ENCODE measurements at regions of chr7 and their contacts with region 1.

Region 1: DNA sequence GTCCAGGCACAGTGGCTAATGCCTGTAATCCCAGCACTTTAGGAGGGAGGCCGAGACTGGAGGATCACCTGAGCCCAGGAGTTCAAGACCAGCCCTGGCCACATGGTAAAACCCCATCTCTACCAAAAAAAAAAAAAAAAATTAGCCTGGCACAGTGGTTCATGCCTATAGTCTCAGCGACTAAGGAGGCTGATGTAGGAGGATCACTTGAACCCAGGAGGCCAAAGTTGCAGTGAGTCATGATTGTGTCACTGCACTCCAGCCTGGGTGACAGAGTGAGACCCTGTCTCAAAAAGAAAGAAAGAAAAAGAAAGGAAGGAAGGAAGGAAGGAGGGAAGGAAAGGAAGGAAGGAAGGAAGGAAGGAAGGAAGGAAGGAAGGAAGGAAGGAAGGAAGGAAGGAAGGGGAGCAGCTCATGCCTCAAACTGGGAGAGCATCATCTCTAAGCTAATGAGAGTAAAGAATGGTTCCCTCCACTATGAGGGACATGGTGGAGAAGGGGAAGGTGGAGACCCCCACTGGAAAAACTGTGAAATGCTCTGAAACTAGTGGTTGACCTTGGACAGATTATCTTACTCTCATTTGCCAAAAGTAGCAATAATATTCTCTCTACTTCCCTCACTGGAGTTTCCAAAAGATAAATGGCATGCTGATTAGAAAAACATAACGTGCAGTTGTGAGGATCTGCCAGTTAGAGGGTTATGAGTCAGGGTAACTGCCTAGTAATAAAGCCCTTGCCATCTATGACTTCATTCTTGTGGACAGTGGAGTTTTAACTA is 16.8 kb downstream of the GIMAP5 start:
- DNase-seq: peak in 1 of 5 donors; percentile 45
- H3K4me3 ChIP-seq: no peak overlapping the region
- H3K4me3 Mint-ChIP-seq: peak overlapping the region in 7 of 8 donors; percentile 8 to 76 (median 52)
- H3K27ac ChIP-seq: peak overlapping the region; percentile 37
- H3K27ac Mint-ChIP-seq: peak overlapping the region; percentile 90 to 97 (median 93)
- H3K4me1 ChIP-seq: peaks cover 80% of the 10 kb centered on the region
- H3K4me1 Mint-ChIP-seq: peaks cover 56 to 79% (median 68%) of the 10 kb centered on the region in 4 donors
- H3K27me3 ChIP-seq: no peaks in the 10 kb centered on the region
- H3K27me3 Mint-ChIP-seq: peaks cover 0 to 2% of the 10 kb centered on the region in 2 donors

Region 2: GRCh38 chr7:150404805-150405583 is 349.0 kb before region 1 on chr7:
- CTCF ChIA-PET with region 1: interaction called, 3 read pairs
- POLR2A ChIA-PET with region 1: interaction called, 18 read pairs
- intact Hi-C with region 1: loop called (anchors 1 kb)
- DNase-seq: peak; percentile 75 to 80 (median 77)
- H3K4me3 ChIP-seq: peak overlapping the region; percentile 62 to 92
- H3K4me3 Mint-ChIP-seq: peak overlapping the region; percentile 93 to 99 (median 98)
- H3K27ac ChIP-seq: peak overlapping the region; percentile 85
- H3K27ac Mint-ChIP-seq: peak overlapping the region; percentile 80 to 99 (median 98)
- H3K4me1 ChIP-seq: peaks cover 30% of the 10 kb centered on the region
- H3K4me1 Mint-ChIP-seq: peaks cover 21 to 53% (median 39%) of the 10 kb centered on the region in 4 donors
- H3K27me3 ChIP-seq: no peaks in the 10 kb centered on the region
- H3K27me3 Mint-ChIP-seq: no peaks in the 10 kb centered on the region

Region 3: DNA sequence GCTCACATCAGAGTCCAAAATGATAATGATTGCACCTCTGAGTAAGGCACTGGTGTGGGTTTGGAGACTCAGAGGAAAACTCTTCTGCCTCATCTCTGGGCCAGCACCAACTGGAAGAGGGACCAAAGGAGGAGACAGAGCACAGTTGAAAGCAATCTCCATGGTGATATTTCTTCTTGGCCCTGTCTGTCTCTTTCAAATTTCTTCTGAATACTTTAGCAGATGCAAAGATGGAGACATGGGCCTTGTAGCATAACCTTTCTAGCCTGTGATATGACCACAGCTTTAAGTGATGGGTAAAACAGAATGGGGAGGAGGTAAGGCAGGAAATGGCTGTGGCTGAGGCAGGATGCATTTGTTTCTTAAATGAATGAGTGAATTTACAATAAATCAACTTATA is 251.5 kb before region 1 on chr7:
- CTCF ChIA-PET with region 1: no interaction called
- POLR2A ChIA-PET with region 1: interaction called, 31 read pairs
- intact Hi-C with region 1: no loop called
- DNase-seq: peak; percentile 56 to 75 (median 67)
- H3K4me3 ChIP-seq: no peak overlapping the region
- H3K4me3 Mint-ChIP-seq: peak overlapping the region; percentile 22 to 86 (median 73)
- H3K27ac ChIP-seq: peak overlapping the region; percentile 51
- H3K27ac Mint-ChIP-seq: peak overlapping the region; percentile 84 to 99 (median 92)
- H3K4me1 ChIP-seq: peaks cover 53% of the 10 kb centered on the region
- H3K4me1 Mint-ChIP-seq: peaks cover 66 to 94% (median 81%) of the 10 kb centered on the region in 4 donors
- H3K27me3 ChIP-seq: no peaks in the 10 kb centered on the region
- H3K27me3 Mint-ChIP-seq: no peaks in the 10 kb centered on the region

Region 4: GRCh38 chr7:150556521-150557138 is 197.4 kb before region 1 on chr7:
- CTCF ChIA-PET with region 1: interaction called, 4 read pairs
- POLR2A ChIA-PET with region 1: interaction called, 235 read pairs
- intact Hi-C with region 1: no loop called
- DNase-seq: peak in 4 of 5 donors; percentile 53 to 76 (median 72)
- H3K4me3 ChIP-seq: peak overlapping the region in 1 of 2 donors; percentile 4
- H3K4me3 Mint-ChIP-seq: peak overlapping the region; percentile 34 to 87 (median 78)
- H3K27ac ChIP-seq: peak overlapping the region; percentile 40
- H3K27ac Mint-ChIP-seq: peak overlapping the region; percentile 79 to 96 (median 94)
- H3K4me1 ChIP-seq: peaks cover 64% of the 10 kb centered on the region
- H3K4me1 Mint-ChIP-seq: peaks cover 53 to 87% (median 72%) of the 10 kb centered on the region in 4 donors
- H3K27me3 ChIP-seq: no peaks in the 10 kb centered on the region
- H3K27me3 Mint-ChIP-seq: no peaks in the 10 kb centered on the region

Region 5: DNA sequence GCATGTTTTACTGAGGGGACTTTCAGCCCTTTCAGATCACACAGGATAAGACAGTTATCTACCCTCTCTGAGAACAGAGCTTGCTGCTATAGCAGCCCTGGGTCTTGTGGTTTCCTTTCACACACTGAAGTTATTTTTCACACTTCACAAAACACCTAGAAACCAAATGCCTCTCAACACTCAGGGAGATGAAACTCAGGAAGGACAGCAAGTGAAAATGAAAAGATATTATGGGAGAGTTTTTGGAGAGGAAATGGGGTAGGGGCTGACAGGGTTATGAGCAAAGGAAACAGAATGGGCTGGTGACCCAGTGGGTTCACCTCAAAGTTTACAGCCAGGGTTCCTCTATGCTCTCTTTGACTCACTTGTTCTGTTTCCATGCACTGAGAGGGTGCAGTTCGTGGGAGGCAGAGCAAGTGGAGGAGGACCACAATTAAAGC is 85.5 kb before region 1 on chr7:
- CTCF ChIA-PET with region 1: interaction called, 5 read pairs
- POLR2A ChIA-PET with region 1: interaction called, 149 read pairs
- intact Hi-C with region 1: loop called (anchors 2 kb)
- DNase-seq: peak; percentile 80 to 88 (median 85)
- H3K4me3 ChIP-seq: peak overlapping the region; percentile 2 to 26
- H3K4me3 Mint-ChIP-seq: peak overlapping the region; percentile 55 to 84 (median 72)
- H3K27ac ChIP-seq: peak overlapping the region; percentile 68
- H3K27ac Mint-ChIP-seq: peak overlapping the region; percentile 82 to 99 (median 98)
- H3K4me1 ChIP-seq: peaks cover 92% of the 10 kb centered on the region
- H3K4me1 Mint-ChIP-seq: peaks cover 63 to 95% (median 79%) of the 10 kb centered on the region in 4 donors
- H3K27me3 ChIP-seq: no peaks in the 10 kb centered on the region
- H3K27me3 Mint-ChIP-seq: no peaks in the 10 kb centered on the region

Region 6: DNA sequence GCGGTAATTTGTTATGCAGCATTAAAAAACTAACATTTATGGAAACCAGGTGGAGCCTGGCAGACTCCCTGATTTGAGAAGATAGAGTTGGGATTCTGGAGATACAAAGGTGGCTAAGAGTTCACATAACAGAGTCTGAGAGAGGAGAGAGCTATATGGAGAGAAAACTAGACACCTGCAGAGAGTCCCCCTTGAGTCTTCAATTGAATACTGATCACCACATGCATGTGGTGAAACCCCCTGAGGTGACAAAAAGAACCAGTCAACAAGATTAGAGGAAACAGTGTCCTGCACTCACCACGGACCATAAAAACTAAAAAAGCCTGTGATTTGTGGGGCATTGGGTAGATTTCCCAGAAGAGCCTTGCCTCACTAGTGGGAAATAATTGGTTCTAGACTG is 58.4 kb before region 1 on chr7:
- CTCF ChIA-PET with region 1: interaction called, 4 read pairs
- POLR2A ChIA-PET with region 1: interaction called, 13 read pairs
- intact Hi-C with region 1: no loop called
- DNase-seq: no peak
- H3K4me3 ChIP-seq: no peak overlapping the region
- H3K4me3 Mint-ChIP-seq: peak overlapping the region in 2 of 8 donors; percentile 57
- H3K27ac ChIP-seq: no peak overlapping the region
- H3K27ac Mint-ChIP-seq: peak overlapping the region in 1 of 7 donors; percentile 4
- H3K4me1 ChIP-seq: peaks cover 6% of the 10 kb centered on the region
- H3K4me1 Mint-ChIP-seq: peaks cover 5 to 20% (median 13%) of the 10 kb centered on the region in 4 donors
- H3K27me3 ChIP-seq: no peaks in the 10 kb centered on the region
- H3K27me3 Mint-ChIP-seq: no peaks in the 10 kb centered on the region

Region 7: GRCh38 chr7:150737265-150738055 is 16.6 kb before region 1 on chr7 and contains the start of gene GIMAP5:
- CTCF ChIA-PET with region 1: interaction called, 18 read pairs
- POLR2A ChIA-PET with region 1: interaction called, 593 read pairs
- intact Hi-C with region 1: loop called (anchors 2 kb)
- DNase-seq: peak in 4 of 5 donors; percentile 58 to 74 (median 61)
- H3K4me3 ChIP-seq: peak within 1 kb of the TSS; percentile 81 to 82
- H3K4me3 Mint-ChIP-seq: peak within 1 kb of the TSS; percentile 92 to 100 (median 98)
- H3K27ac ChIP-seq: peak within 1 kb of the TSS; percentile 83
- H3K27ac Mint-ChIP-seq: peak within 1 kb of the TSS; percentile 86 to 98 (median 96)
- H3K4me1 ChIP-seq: peaks cover 64% of the 10 kb centered on the region
- H3K4me1 Mint-ChIP-seq: peaks cover 55 to 94% (median 64%) of the 10 kb centered on the region in 4 donors
- H3K27me3 ChIP-seq: no peaks in the 10 kb centered on the region
- H3K27me3 Mint-ChIP-seq: no peaks in the 10 kb centered on the region
- total RNA-seq, gene GIMAP5: 296 to 297 TPM